CD4-positive, alpha-beta memory T cell (primary cell): ENCODE measurements at regions of chr1 and their contacts with region 1.

Region 1: GRCh38 chr1:160768295-160768657 is 27.7 kb upstream of the LY9 start:
- DNase-seq: peak; percentile 83 to 87 (median 84)
- H3K4me3 ChIP-seq: peak overlapping the region; percentile 45 to 57
- H3K4me3 Mint-ChIP-seq: peak overlapping the region; percentile 83 to 93 (median 88)
- H3K27ac ChIP-seq: peak overlapping the region; percentile 68
- H3K27ac Mint-ChIP-seq: peak overlapping the region; percentile 93 to 99 (median 97)
- H3K4me1 ChIP-seq: peaks cover 18% of the 10 kb centered on the region
- H3K4me1 Mint-ChIP-seq: peaks cover 16 to 24% (median 19%) of the 10 kb centered on the region in 4 donors
- H3K27me3 ChIP-seq: no peaks in the 10 kb centered on the region
- H3K27me3 Mint-ChIP-seq: no peaks in the 10 kb centered on the region

Region 2: DNA sequence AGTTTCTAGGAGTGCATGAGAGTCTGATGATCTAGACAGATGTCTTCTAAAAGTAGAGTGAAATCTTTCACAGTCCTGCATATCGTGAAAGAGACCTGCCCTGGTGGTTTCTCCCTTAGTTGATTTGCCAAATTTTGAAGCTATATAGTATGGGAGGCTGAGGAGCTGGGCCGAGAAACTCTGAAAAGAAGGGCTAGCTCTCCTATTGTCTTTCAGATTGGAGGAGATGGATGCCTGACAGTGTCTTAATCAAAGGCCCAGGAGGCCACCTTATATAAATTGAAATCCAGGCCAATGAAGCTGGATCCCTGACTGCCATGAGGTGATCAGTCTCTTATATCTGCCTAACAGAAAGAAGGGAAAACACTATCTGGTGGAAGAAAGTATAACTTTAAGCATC is 170.6 kb before region 1 on chr1:
- CTCF ChIA-PET with region 1: no interaction called
- POLR2A ChIA-PET with region 1: no interaction called
- intact Hi-C with region 1: no loop called
- DNase-seq: no peak
- H3K4me3 ChIP-seq: no peak overlapping the region
- H3K4me3 Mint-ChIP-seq: no peak overlapping the region
- H3K27ac ChIP-seq: no peak overlapping the region
- H3K27ac Mint-ChIP-seq: no peak overlapping the region
- H3K4me1 ChIP-seq: no peaks in the 10 kb centered on the region
- H3K4me1 Mint-ChIP-seq: peaks cover 0 to 8% (median 3%) of the 10 kb centered on the region in 4 donors
- H3K27me3 ChIP-seq: no peaks in the 10 kb centered on the region
- H3K27me3 Mint-ChIP-seq: no peaks in the 10 kb centered on the region

Region 3: GRCh38 chr1:160618763-160619274 is 149.5 kb before region 1 on chr1:
- CTCF ChIA-PET with region 1: interaction called, 17 read pairs
- POLR2A ChIA-PET with region 1: no interaction called
- intact Hi-C with region 1: loop called (anchors 1 kb)
- DNase-seq: peak; percentile 52 to 58 (median 55)
- H3K4me3 ChIP-seq: no peak overlapping the region
- H3K4me3 Mint-ChIP-seq: peak overlapping the region in 5 of 8 donors; percentile 4 to 41 (median 23)
- H3K27ac ChIP-seq: no peak overlapping the region
- H3K27ac Mint-ChIP-seq: peak overlapping the region; percentile 61 to 94 (median 84)
- H3K4me1 ChIP-seq: peaks cover 86% of the 10 kb centered on the region
- H3K4me1 Mint-ChIP-seq: peaks cover 53 to 86% (median 69%) of the 10 kb centered on the region in 4 donors
- H3K27me3 ChIP-seq: no peaks in the 10 kb centered on the region
- H3K27me3 Mint-ChIP-seq: no peaks in the 10 kb centered on the region

Region 4: GRCh38 chr1:160704250-160704649 is 64.0 kb before region 1 on chr1:
- CTCF ChIA-PET with region 1: interaction called, 28 read pairs
- POLR2A ChIA-PET with region 1: interaction called, 16 read pairs
- intact Hi-C with region 1: no loop called
- DNase-seq: no peak
- H3K4me3 ChIP-seq: no peak overlapping the region
- H3K4me3 Mint-ChIP-seq: peak overlapping the region in 7 of 8 donors; percentile 50 to 90 (median 62)
- H3K27ac ChIP-seq: peak overlapping the region; percentile 10
- H3K27ac Mint-ChIP-seq: peak overlapping the region in 6 of 7 donors; percentile 19 to 94 (median 74)
- H3K4me1 ChIP-seq: peaks cover 96% of the 10 kb centered on the region
- H3K4me1 Mint-ChIP-seq: peaks cover 0 to 72% (median 60%) of the 10 kb centered on the region in 4 donors
- H3K27me3 ChIP-seq: no peaks in the 10 kb centered on the region
- H3K27me3 Mint-ChIP-seq: no peaks in the 10 kb centered on the region

Region 5: DNA sequence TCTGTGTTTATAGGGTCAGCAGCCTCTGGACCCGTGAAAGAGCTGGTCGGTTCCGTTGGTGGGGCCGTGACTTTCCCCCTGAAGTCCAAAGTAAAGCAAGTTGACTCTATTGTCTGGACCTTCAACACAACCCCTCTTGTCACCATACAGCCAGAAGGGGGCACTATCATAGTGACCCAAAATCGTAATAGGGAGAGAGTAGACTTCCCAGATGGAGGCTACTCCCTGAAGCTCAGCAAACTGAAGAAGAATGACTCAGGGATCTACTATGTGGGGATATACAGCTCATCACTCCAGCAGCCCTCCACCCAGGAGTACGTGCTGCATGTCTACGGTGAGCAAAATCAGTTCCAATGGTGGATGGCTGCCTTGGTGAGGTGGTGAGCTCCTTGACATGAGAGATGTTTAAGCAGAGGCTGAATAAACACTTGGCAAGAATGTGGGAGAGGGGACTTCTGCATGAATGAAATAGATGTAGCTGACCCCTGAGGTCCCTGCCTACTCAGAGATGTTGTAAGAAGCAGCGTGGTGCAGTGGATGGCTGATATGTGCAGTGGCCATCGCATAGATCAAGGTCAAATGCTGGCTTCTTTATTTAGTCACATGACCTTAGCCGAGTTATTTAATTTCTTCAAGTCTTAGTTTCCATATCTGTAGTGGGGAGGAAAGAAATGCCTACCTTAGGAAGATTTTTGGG is 19.9 kb before region 1 on chr1:
- CTCF ChIA-PET with region 1: interaction called, 19 read pairs
- POLR2A ChIA-PET with region 1: interaction called, 4 read pairs
- intact Hi-C with region 1: loop called (anchors 2 kb)
- DNase-seq: no peak
- H3K4me3 ChIP-seq: no peak overlapping the region
- H3K4me3 Mint-ChIP-seq: no peak overlapping the region
- H3K27ac ChIP-seq: no peak overlapping the region
- H3K27ac Mint-ChIP-seq: peak overlapping the region in 1 of 7 donors; percentile 12
- H3K4me1 ChIP-seq: peaks cover 16% of the 10 kb centered on the region
- H3K4me1 Mint-ChIP-seq: peaks cover 10 to 45% (median 23%) of the 10 kb centered on the region in 4 donors
- H3K27me3 ChIP-seq: no peaks in the 10 kb centered on the region
- H3K27me3 Mint-ChIP-seq: peaks cover 2% of the 10 kb centered on the region in 2 donors

Region 6: GRCh38 chr1:160830321-160831153 is 62.3 kb after region 1 on chr1:
- CTCF ChIA-PET with region 1: interaction called, 138 read pairs
- POLR2A ChIA-PET with region 1: interaction called, 4 read pairs
- intact Hi-C with region 1: no loop called
- DNase-seq: peak; percentile 62 to 75 (median 70)
- H3K4me3 ChIP-seq: no peak overlapping the region
- H3K4me3 Mint-ChIP-seq: no peak overlapping the region
- H3K27ac ChIP-seq: no peak overlapping the region
- H3K27ac Mint-ChIP-seq: peak overlapping the region in 6 of 7 donors; percentile 74 to 86 (median 82)
- H3K4me1 ChIP-seq: peaks cover 6% of the 10 kb centered on the region
- H3K4me1 Mint-ChIP-seq: peaks cover 13 to 35% (median 24%) of the 10 kb centered on the region in 4 donors
- H3K27me3 ChIP-seq: no peaks in the 10 kb centered on the region
- H3K27me3 Mint-ChIP-seq: no peaks in the 10 kb centered on the region

Region 7: GRCh38 chr1:160997323-160998038 is 229.2 kb after region 1 on chr1:
- CTCF ChIA-PET with region 1: no interaction called
- POLR2A ChIA-PET with region 1: no interaction called
- intact Hi-C with region 1: loop called (anchors 5 kb)
- DNase-seq: peak in 4 of 5 donors; percentile 30 to 42 (median 38)
- H3K4me3 ChIP-seq: no peak overlapping the region
- H3K4me3 Mint-ChIP-seq: no peak overlapping the region
- H3K27ac ChIP-seq: no peak overlapping the region
- H3K27ac Mint-ChIP-seq: peak overlapping the region; percentile 22 to 93 (median 84)
- H3K4me1 ChIP-seq: peaks cover 8% of the 10 kb centered on the region
- H3K4me1 Mint-ChIP-seq: peaks cover 4 to 8% (median 5%) of the 10 kb centered on the region in 4 donors
- H3K27me3 ChIP-seq: no peaks in the 10 kb centered on the region
- H3K27me3 Mint-ChIP-seq: no peaks in the 10 kb centered on the region

Region 8: DNA sequence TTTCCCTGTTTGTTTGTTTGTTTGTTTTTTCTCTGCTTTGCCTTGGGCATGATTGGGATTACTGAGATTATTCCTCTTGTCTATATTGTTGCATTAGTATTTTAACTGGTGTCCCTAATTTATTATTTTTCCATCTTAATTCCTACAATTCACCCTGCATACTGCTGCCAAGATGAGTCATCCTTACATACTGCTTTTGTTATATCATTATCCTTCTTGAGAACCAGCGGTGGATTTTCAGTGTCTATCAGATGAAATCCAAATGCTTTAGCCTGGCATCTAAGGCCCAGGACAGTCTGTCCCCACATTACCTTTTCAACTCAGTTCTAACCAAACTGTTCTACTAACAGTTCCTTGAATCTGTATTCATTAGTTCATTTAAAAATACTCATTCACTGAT is 1153.7 kb after region 1 on chr1:
- CTCF ChIA-PET with region 1: no interaction called
- POLR2A ChIA-PET with region 1: no interaction called
- intact Hi-C with region 1: no loop called
- DNase-seq: no peak
- H3K4me3 ChIP-seq: no peak overlapping the region
- H3K4me3 Mint-ChIP-seq: peak overlapping the region in 1 of 8 donors; percentile 43
- H3K27ac ChIP-seq: no peak overlapping the region
- H3K27ac Mint-ChIP-seq: peak overlapping the region in 1 of 7 donors; percentile 59
- H3K4me1 ChIP-seq: peaks cover 17% of the 10 kb centered on the region
- H3K4me1 Mint-ChIP-seq: peaks cover 16 to 27% (median 19%) of the 10 kb centered on the region in 4 donors
- H3K27me3 ChIP-seq: no peaks in the 10 kb centered on the region
- H3K27me3 Mint-ChIP-seq: no peaks in the 10 kb centered on the region